K562 (cell line): ENCODE measurements at regions of chr14 and their contacts with region 1.

Region 1: DNA sequence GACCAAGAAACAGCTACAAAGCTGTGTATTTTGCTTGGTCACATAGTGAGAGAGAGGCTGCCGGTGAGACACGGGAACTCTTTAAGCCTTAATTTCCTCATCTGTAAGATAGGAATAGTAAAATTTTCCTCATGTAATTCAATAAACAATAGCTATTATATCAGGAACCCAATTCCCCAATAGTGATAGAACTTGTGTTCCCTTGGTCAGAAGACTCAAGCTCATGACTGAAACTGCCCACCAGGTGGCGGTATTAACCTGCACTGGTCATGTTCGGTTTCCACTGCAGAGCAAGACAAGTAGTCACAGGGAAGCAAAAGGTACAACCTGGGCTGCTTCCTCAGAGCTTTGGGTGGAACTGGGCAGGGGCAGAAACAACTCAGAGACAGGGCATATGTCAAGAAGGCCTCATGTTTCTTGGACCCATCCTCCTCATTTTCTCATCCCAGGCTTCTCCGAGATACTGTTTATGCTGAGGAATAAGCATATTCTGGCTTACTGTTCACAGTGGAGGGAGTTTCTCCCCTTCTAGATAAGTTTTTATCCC is 4.2 kb upstream of the AJUBA start:
- DNase-seq: peak; percentile 76 to 91 (median 77)
- ATAC-seq: peak; percentile 79
- H3K4me3 ChIP-seq: no peak overlapping the region
- H3K27ac ChIP-seq: no peak overlapping the region
- H3K4me1 ChIP-seq: peaks cover 2 to 11% of the 10 kb centered on the region in 2 experiments; a peak in 3 of 5 replicates
- H3K27me3 ChIP-seq: no peaks in the 10 kb centered on the region
- CTCF ChIP-seq: peak; percentile 90 to 97 (median 93)
- EP300 ChIP-seq: no peak
- POLR2A ChIP-seq: no peak
- RAD21 ChIP-seq: peak; percentile 94 to 97

Region 2: GRCh38 chr14:22872033-22872832 is 114.3 kb before region 1 on chr14:
- CTCF ChIA-PET with region 1: no interaction called
- POLR2A ChIA-PET with region 1: no interaction called
- in situ Hi-C with region 1: no loop called
- intact Hi-C with region 1: loop called (anchors 1 kb)
- DNase-seq: peak; percentile 79 to 93 (median 83)
- ATAC-seq: peak; percentile 71
- H3K4me3 ChIP-seq: peak overlapping the region; percentile 87
- H3K27ac ChIP-seq: peak overlapping the region; percentile 98
- H3K4me1 ChIP-seq: peaks cover 12 to 36% of the 10 kb centered on the region in 2 experiments
- H3K27me3 ChIP-seq: no peaks in the 10 kb centered on the region
- CTCF ChIP-seq: peak; percentile 86 to 98 (median 96)
- EP300 ChIP-seq: no peak
- POLR2A ChIP-seq: peak; percentile 30
- RAD21 ChIP-seq: peak; percentile 69 to 73

Region 3: DNA sequence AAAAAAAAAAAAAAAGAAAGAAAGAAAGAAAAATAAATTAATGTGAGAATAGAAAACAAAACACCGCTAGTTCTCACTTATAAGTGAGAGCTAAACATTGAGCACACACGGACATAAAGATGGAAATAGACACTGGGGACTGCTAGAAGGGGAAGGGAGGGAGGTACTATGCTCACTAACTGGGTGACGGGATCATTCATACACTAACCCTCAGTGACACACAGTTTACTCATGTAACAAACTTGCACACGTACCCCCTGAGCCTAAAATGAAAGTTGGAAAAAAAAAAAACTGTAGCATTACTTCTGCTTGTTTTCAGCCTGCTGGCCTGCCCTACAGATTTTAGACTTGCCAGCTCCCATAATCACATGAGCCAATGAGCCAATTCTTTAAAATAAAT is 46.9 kb before region 1 on chr14:
- CTCF ChIA-PET with region 1: interaction called, 3 read pairs
- POLR2A ChIA-PET with region 1: no interaction called
- in situ Hi-C with region 1: loop called (anchors 5 kb)
- intact Hi-C with region 1: loop called (anchors 1 kb)
- DNase-seq: no peak
- ATAC-seq: no peak
- H3K4me3 ChIP-seq: no peak overlapping the region
- H3K27ac ChIP-seq: no peak overlapping the region
- H3K4me1 ChIP-seq: no peaks in the 10 kb centered on the region; a peak in 1 of 5 replicates
- H3K27me3 ChIP-seq: no peaks in the 10 kb centered on the region
- CTCF ChIP-seq: no peak
- EP300 ChIP-seq: no peak
- POLR2A ChIP-seq: no peak
- RAD21 ChIP-seq: no peak

Region 4: GRCh38 chr14:23006544-23007419 is 20.2 kb after region 1 on chr14:
- CTCF ChIA-PET with region 1: no interaction called
- POLR2A ChIA-PET with region 1: interaction called, 81 read pairs
- in situ Hi-C with region 1: no loop called
- intact Hi-C with region 1: no loop called
- DNase-seq: peak; percentile 97 to 99 (median 99)
- ATAC-seq: peak; percentile 94
- H3K4me3 ChIP-seq: peak overlapping the region; percentile 43
- H3K27ac ChIP-seq: peak overlapping the region; percentile 97
- H3K4me1 ChIP-seq: peaks cover 20 to 34% of the 10 kb centered on the region in 2 experiments
- H3K27me3 ChIP-seq: no peaks in the 10 kb centered on the region
- CTCF ChIP-seq: peak; percentile 38 to 49 (median 45); a peak in 5 of 6 replicates
- EP300 ChIP-seq: 0 out of 2 replicates have a peak, but pooled peaks have one; percentile 4
- POLR2A ChIP-seq: peak; percentile 93
- RAD21 ChIP-seq: peak in 1 of 2 experiments; percentile 35; a peak in 2 of 4 replicates

Region 5: DNA sequence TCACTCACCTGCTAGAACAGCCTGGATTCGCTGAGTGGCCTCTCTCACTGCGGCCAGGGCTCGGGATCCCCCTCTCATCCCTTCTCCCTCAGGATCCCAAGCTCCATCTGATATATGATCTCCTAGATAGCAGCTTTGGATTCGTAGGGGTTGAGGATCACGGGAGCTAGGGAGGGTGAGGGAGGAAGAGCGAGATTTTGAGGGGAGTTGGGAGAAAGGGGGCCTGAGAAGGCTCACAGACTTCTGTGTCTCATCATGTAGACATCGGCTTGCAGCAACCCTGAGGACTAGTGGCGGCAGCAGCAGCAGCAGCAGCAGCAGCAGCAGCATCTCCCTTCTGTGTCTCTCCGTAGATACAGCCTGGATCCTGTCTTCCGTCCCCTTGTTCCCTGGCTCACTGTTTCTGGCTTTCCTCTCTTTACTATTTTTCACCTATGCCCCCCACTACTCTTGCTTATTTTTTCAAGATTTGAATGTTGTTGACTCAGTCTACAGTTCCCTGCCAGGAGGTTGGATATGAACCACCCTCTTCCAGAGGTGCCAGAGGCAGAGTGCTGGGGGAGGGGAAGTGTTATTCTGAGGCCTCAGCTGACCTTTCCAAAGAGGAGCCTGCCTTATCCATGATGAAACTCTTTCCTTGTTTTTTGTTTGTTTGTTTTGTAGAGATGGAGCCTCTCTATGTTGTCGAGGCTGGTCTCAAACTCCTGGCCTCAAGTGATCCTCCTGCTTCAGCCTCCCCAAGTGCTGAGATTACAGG is 118.2 kb after region 1 on chr14 and contains the start of gene CIROP:
- CTCF ChIA-PET with region 1: interaction called, 8 read pairs
- POLR2A ChIA-PET with region 1: no interaction called
- in situ Hi-C with region 1: no loop called
- intact Hi-C with region 1: loop called (anchors 5 kb)
- DNase-seq: peak in 1 of 4 experiments; percentile 6
- ATAC-seq: no peak
- H3K4me3 ChIP-seq: no peak within 1 kb of the TSS
- H3K27ac ChIP-seq: no peak within 1 kb of the TSS
- H3K4me1 ChIP-seq: peaks cover 4 to 8% of the 10 kb centered on the region in 2 experiments; a peak in 4 of 5 replicates
- H3K27me3 ChIP-seq: no peaks in the 10 kb centered on the region
- CTCF ChIP-seq: no peak
- EP300 ChIP-seq: no peak
- POLR2A ChIP-seq: no peak
- RAD21 ChIP-seq: no peak
- polyA plus RNA-seq, gene CIROP: not detected